Heart right ventricle (tissue), 16 donors: ENCODE measurements at regions of chr10 and their contacts with region 1.

Region 1: GRCh38 chr10:6202684-6203330 is at the start of gene PFKFB3:
- DNase-seq: peak; percentile 95 to 97
- ATAC-seq: peak; percentile 93 to 96 (median 95)
- H3K4me3 ChIP-seq: peak within 1 kb of the TSS; percentile 50 to 94 (median 78)
- H3K27ac ChIP-seq: peak within 1 kb of the TSS; percentile 22 to 98 (median 92)
- H3K4me1 ChIP-seq: peaks cover 6 to 52% (median 31%) of the 10 kb centered on the region in 9 donors
- H3K27me3 ChIP-seq: no peaks in the 10 kb centered on the region
- CTCF ChIP-seq: peak; percentile 94 to 99 (median 98)
- total RNA-seq, gene PFKFB3: 7.6 to 77.3 (median 16.3) TPM

Region 2: GRCh38 chr10:6108603-6109443 is 94.0 kb before region 1 on chr10:
- intact Hi-C with region 1: loop called in 8 of 10 experiments (anchors 2 to 10 kb)
- DNase-seq: no peak
- ATAC-seq: peak in 4 of 8 donors; percentile 18 to 42 (median 34)
- H3K4me3 ChIP-seq: no peak overlapping the region
- H3K27ac ChIP-seq: no peak overlapping the region
- H3K4me1 ChIP-seq: peaks cover 0 to 16% (median 11%) of the 10 kb centered on the region in 9 donors
- H3K27me3 ChIP-seq: no peaks in the 10 kb centered on the region
- CTCF ChIP-seq: peak; percentile 53 to 85 (median 75)

Region 3: DNA sequence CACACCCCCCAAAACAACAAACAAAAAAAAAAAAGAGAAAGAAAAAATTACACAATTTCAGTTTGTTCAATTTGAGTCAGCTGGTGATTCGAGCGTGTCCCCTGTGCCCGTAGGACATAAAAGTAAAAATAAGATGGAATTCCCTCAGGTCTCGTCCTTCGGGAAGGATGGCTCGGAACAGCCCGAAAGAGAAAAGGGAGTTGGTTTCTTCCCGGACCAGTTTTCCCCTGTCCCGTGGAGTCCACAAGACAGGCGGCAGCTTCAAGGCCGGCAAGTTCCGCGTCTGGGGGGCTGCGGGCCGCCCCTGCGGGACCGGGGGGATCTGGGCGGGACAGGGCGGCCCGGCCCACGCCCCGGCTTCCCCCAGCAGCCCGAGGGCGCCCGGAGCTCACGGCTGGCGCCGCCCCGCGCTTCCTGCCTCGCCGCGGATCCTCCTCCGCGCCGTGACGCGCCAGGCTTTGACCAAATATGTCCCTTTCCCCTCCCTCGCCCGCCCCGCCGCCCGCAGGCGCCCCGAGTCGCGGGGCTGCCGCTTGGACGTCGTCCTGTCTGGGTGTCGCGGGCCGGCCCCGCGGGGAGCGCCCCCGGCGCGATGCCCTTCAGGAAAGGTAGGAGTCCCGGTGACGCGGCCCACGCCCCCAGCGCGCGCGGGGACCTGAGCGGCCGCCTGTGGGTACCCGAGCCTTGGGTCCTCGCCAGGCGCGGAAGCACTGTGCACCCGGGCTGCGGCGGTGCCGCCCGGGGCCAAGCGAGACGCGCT is 58.2 kb before region 1 on chr10:
- intact Hi-C with region 1: loop called in 1 of 10 experiments (anchors 10 kb)
- DNase-seq: peak; percentile 91 to 92
- ATAC-seq: peak; percentile 92 to 96 (median 94)
- H3K4me3 ChIP-seq: peak overlapping the region; percentile 61 to 94 (median 82)
- H3K27ac ChIP-seq: peak overlapping the region; percentile 30 to 98 (median 86)
- H3K4me1 ChIP-seq: peaks cover 0 to 82% (median 16%) of the 10 kb centered on the region in 9 donors
- H3K27me3 ChIP-seq: peaks cover 0 to 14% (median 0%) of the 10 kb centered on the region in 7 donors
- CTCF ChIP-seq: peak in 3 of 9 donors; percentile 30 to 40 (median 35)

Region 4: DNA sequence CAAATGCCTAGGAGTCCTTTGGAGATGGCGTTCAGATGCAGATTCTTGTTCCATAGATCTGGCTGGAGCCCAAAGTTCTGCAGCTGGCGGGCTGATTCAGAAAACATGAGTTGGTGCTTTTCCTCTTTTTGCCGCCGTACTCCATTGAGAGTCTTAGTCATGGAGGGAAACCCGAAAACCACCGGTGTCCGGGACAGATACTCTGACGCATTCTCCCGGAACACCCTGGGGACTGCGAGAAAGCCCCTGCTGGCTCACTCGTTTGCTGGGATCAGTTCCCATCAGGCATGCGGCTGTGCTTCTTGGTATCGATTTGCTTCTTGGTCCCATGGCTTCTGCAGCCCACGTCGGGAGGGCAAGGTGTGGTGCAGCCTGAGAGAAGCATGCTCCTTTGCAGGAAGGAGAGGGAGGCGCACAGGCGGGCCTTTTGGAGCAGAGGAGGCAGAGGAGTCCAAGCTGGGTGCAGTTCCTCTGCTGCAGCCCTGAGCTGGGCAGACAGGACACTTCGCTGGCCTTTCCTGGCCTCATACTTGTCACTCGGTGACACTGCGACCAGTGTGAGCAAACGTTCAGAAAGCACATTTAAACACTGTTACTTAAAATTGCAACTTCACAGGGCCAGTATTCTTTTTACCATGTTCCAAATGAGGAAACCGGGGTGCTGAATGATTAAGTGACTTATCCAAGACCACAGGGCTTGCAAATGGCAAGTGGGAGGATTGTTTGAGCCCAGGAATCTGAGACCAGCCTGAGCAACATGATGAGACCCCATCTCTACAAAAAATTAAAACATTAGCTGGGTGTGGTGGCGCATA is 30.7 kb before region 1 on chr10:
- intact Hi-C with region 1: loop called in 3 of 10 experiments (anchors 2 to 5 kb)
- DNase-seq: peak; percentile 60 to 79
- ATAC-seq: peak; percentile 70 to 88 (median 76)
- H3K4me3 ChIP-seq: peak overlapping the region in 7 of 10 donors; percentile 1 to 34 (median 14)
- H3K27ac ChIP-seq: peak overlapping the region in 8 of 10 donors; percentile 19 to 84 (median 62)
- H3K4me1 ChIP-seq: peaks cover 3 to 89% (median 66%) of the 10 kb centered on the region in 9 donors
- H3K27me3 ChIP-seq: no peaks in the 10 kb centered on the region
- CTCF ChIP-seq: no peak

Region 5: GRCh38 chr10:6401562-6402348 is 198.9 kb after region 1 on chr10:
- intact Hi-C with region 1: loop called in 8 of 10 experiments (anchors 1 to 10 kb)
- DNase-seq: peak; percentile 48 to 80
- ATAC-seq: peak; percentile 90 to 97 (median 96)
- H3K4me3 ChIP-seq: peak overlapping the region in 8 of 10 donors; percentile 23 to 54 (median 41)
- H3K27ac ChIP-seq: peak overlapping the region in 7 of 10 donors; percentile 21 to 87 (median 38)
- H3K4me1 ChIP-seq: peaks cover 0 to 48% (median 8%) of the 10 kb centered on the region in 9 donors
- H3K27me3 ChIP-seq: peaks cover 0 to 7% (median 0%) of the 10 kb centered on the region in 7 donors
- CTCF ChIP-seq: peak; percentile 57 to 83 (median 76)